MCF 10A (cell line): ENCODE measurements at regions of chr17 and their contacts with region 1.

Region 1: GRCh38 chr17:59619293-59620063 is at the start of gene CLTC:
- DNase-seq: peak; percentile 95
- H3K4me3 Mint-ChIP-seq: peak within 1 kb of the TSS; percentile 98
- H3K27ac Mint-ChIP-seq: peak within 1 kb of the TSS; percentile 100
- H3K4me1 Mint-ChIP-seq: peaks cover 23% of the 10 kb centered on the region
- H3K27me3 Mint-ChIP-seq: no peaks in the 10 kb centered on the region
- CTCF ChIP-seq: no peak
- total RNA-seq, gene CLTC: 240 and 288 TPM in 2 replicates

Region 2: GRCh38 chr17:59607817-59608403 is 11.6 kb before region 1 on chr17:
- CTCF ChIA-PET with region 1: interaction called, 5 read pairs
- POLR2A ChIA-PET with region 1: interaction called, 28 read pairs
- intact Hi-C with region 1: no loop called
- DNase-seq: peak; percentile 16
- H3K4me3 Mint-ChIP-seq: no peak overlapping the region
- H3K27ac Mint-ChIP-seq: no peak overlapping the region
- H3K4me1 Mint-ChIP-seq: no peaks in the 10 kb centered on the region
- H3K27me3 Mint-ChIP-seq: no peaks in the 10 kb centered on the region
- CTCF ChIP-seq: peak; percentile 19

Region 3: GRCh38 chr17:59641799-59642489 is 22.5 kb after region 1 on chr17:
- CTCF ChIA-PET with region 1: interaction called, 4 read pairs
- POLR2A ChIA-PET with region 1: interaction called, 91 read pairs
- intact Hi-C with region 1: no loop called
- DNase-seq: no peak
- H3K4me3 Mint-ChIP-seq: no peak overlapping the region
- H3K27ac Mint-ChIP-seq: peak overlapping the region; percentile 76
- H3K4me1 Mint-ChIP-seq: peaks cover 24% of the 10 kb centered on the region
- H3K27me3 Mint-ChIP-seq: no peaks in the 10 kb centered on the region
- CTCF ChIP-seq: no peak

Region 4: DNA sequence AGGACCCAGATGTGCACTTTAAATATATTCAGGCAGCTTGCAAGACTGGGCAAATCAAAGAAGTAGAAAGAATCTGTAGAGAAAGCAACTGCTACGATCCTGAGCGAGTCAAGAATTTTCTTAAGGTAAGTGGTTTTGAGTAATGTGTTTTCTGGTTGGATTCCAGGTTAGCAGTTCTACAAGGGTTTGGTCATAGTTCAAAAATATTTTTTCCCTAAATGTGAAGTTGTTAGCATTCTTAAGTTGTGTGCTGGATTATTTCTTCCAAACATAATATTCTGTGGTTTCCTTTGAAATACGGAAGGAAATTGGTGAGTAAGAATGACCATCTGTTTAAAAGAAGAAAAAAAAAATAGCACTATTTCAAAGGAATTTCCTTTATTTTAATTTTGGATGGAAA is 49.3 kb after region 1 on chr17:
- CTCF ChIA-PET with region 1: no interaction called
- POLR2A ChIA-PET with region 1: interaction called, 14 read pairs
- intact Hi-C with region 1: no loop called
- DNase-seq: peak; percentile 39
- H3K4me3 Mint-ChIP-seq: peak overlapping the region; percentile 9
- H3K27ac Mint-ChIP-seq: peak overlapping the region; percentile 37
- H3K4me1 Mint-ChIP-seq: no peaks in the 10 kb centered on the region
- H3K27me3 Mint-ChIP-seq: no peaks in the 10 kb centered on the region
- CTCF ChIP-seq: no peak